CD8-positive, alpha-beta T cell (primary cell): ENCODE measurements at regions of chr15 and their contacts with region 1.

Region 1: DNA sequence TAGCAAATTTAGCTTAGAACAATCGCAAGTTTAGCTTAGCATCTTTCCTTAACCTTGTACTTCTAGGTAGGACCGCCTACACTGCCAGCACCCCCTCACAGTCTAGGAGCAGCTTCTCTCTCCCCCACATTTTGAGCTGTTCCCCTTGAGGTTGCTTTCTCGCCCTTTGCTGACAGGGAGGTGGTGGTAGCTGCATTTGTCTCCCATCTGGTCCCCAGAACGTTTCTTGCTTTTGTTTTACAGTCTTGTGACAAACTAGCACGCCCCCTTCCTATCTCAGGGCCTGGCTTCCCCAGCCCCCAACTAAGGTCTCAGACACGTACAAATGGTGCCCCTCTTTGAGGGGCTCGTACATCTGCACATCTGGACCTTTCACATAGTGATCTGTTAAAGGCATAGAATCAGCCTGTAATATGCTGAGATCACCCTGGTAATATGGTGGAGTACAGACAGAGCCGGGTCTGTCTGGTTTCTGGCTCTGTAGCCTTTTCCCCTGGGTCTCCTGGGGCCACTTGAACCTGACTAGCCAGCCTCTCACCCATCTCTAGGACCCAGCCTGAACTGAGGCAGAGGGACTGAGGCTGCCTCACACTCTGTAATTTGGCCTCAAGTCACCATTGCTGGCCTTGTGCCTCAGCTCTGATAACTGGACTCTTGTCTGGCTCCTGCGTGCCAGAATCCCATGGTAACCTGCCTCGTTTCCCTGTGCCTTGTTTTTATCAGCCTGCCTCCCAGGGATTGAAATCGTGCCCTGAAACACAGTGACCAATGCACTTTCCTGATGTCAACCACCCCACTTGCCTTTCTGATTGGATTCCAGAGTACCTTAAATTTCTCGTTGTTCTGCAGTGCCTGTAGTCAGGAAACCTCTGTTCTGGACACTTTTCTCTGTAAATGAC is 27.7 kb downstream of the CRTC3 start:
- DNase-seq: peak in 4 of 9 experiments; percentile 24 to 58 (median 39)
- ATAC-seq: peak; percentile 53
- H3K4me3 ChIP-seq: no peak overlapping the region
- H3K4me3 Mint-ChIP-seq: peak overlapping the region; percentile 26
- H3K27ac ChIP-seq: no peak overlapping the region
- H3K27ac Mint-ChIP-seq: peak overlapping the region; percentile 84
- H3K4me1 ChIP-seq: peaks cover 53% of the 10 kb centered on the region
- H3K4me1 Mint-ChIP-seq: peaks cover 79% of the 10 kb centered on the region
- H3K27me3 ChIP-seq: no peaks in the 10 kb centered on the region
- H3K27me3 Mint-ChIP-seq: no peaks in the 10 kb centered on the region
- CTCF ChIP-seq: no peak

Region 2: GRCh38 chr15:90539789-90540188 is 17.6 kb before region 1 on chr15:
- CTCF ChIA-PET with region 1: interaction called, 6 read pairs
- POLR2A ChIA-PET with region 1: interaction called, 5 read pairs
- intact Hi-C with region 1: loop called in 1 of 2 experiments (anchors 2 kb)
- DNase-seq: peak in 4 of 9 experiments; percentile 24 to 65 (median 38)
- ATAC-seq: peak; percentile 84
- H3K4me3 ChIP-seq: peak overlapping the region in 1 of 2 experiments; percentile 30
- H3K4me3 Mint-ChIP-seq: peak overlapping the region; percentile 82
- H3K27ac ChIP-seq: peak overlapping the region; percentile 27 to 71
- H3K27ac Mint-ChIP-seq: peak overlapping the region; percentile 95
- H3K4me1 ChIP-seq: peaks cover 26% of the 10 kb centered on the region
- H3K4me1 Mint-ChIP-seq: peaks cover 79% of the 10 kb centered on the region
- H3K27me3 ChIP-seq: no peaks in the 10 kb centered on the region
- H3K27me3 Mint-ChIP-seq: no peaks in the 10 kb centered on the region
- CTCF ChIP-seq: no peak

Region 3: GRCh38 chr15:90571063-90571541 is 13.7 kb after region 1 on chr15:
- CTCF ChIA-PET with region 1: interaction called, 5 read pairs
- POLR2A ChIA-PET with region 1: interaction called, 6 read pairs
- intact Hi-C with region 1: loop called in 1 of 2 experiments (anchors 1 kb)
- DNase-seq: peak in 1 of 9 experiments; percentile 38
- ATAC-seq: no peak
- H3K4me3 ChIP-seq: peak overlapping the region in 1 of 2 experiments; percentile 12
- H3K4me3 Mint-ChIP-seq: peak overlapping the region; percentile 16
- H3K27ac ChIP-seq: peak overlapping the region in 1 of 2 experiments; percentile 55
- H3K27ac Mint-ChIP-seq: peak overlapping the region; percentile 2
- H3K4me1 ChIP-seq: peaks cover 94% of the 10 kb centered on the region
- H3K4me1 Mint-ChIP-seq: peaks cover 81% of the 10 kb centered on the region
- H3K27me3 ChIP-seq: no peaks in the 10 kb centered on the region
- H3K27me3 Mint-ChIP-seq: no peaks in the 10 kb centered on the region
- CTCF ChIP-seq: no peak

Region 4: DNA sequence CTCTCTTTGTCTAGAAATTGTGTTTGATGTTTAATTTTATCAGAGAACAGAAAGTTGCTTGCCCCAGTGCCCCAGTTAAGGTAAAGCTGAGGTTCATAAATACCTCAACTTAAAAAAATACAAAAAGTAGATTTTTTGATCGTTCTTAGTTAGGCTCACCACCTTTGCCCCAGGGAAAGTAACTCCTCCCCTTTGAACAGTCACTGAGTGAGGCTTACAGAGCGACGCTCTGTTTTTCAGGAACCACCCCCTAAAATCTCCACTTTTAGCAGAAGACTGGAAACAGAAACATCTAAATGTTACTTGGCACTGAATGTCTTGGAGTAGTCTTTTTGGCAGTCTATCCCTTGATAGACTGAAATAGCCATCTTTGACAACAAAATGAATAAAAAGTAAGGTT is 184.7 kb after region 1 on chr15:
- CTCF ChIA-PET with region 1: no interaction called
- POLR2A ChIA-PET with region 1: no interaction called
- intact Hi-C with region 1: no loop called
- DNase-seq: peak in 1 of 9 experiments; percentile 10
- ATAC-seq: no peak
- H3K4me3 ChIP-seq: no peak overlapping the region
- H3K4me3 Mint-ChIP-seq: no peak overlapping the region
- H3K27ac ChIP-seq: no peak overlapping the region
- H3K27ac Mint-ChIP-seq: no peak overlapping the region
- H3K4me1 ChIP-seq: no peaks in the 10 kb centered on the region
- H3K4me1 Mint-ChIP-seq: peaks cover 6% of the 10 kb centered on the region
- H3K27me3 ChIP-seq: no peaks in the 10 kb centered on the region
- H3K27me3 Mint-ChIP-seq: no peaks in the 10 kb centered on the region
- CTCF ChIP-seq: no peak

Region 5: DNA sequence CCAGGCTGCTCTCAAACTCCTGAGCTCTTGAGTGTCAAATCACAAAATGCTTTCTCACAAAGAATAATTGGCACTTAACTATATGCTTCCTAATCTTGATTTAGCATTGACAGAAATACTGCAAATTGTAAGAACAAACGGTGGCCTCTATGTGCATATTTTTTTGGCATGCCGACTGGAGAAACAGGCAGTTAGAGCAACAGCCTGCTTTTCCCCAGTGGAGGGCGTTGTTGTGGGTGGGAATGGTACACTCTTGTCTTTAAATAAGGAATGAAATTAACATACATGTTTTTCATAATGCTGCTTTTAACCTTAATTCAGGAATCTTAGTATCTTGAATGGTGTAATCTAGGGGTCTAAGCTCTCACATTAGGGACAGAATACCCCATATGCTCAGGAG is 511.5 kb after region 1 on chr15:
- CTCF ChIA-PET with region 1: no interaction called
- POLR2A ChIA-PET with region 1: no interaction called
- intact Hi-C with region 1: no loop called
- DNase-seq: no peak
- ATAC-seq: no peak
- H3K4me3 ChIP-seq: no peak overlapping the region
- H3K4me3 Mint-ChIP-seq: no peak overlapping the region
- H3K27ac ChIP-seq: no peak overlapping the region
- H3K27ac Mint-ChIP-seq: no peak overlapping the region
- H3K4me1 ChIP-seq: no peaks in the 10 kb centered on the region
- H3K4me1 Mint-ChIP-seq: no peaks in the 10 kb centered on the region
- H3K27me3 ChIP-seq: no peaks in the 10 kb centered on the region
- H3K27me3 Mint-ChIP-seq: peaks cover 18% of the 10 kb centered on the region
- CTCF ChIP-seq: no peak